HEK293 (cell line): ENCODE measurements at regions of chr18 and their contacts with region 1.

Region 1: DNA sequence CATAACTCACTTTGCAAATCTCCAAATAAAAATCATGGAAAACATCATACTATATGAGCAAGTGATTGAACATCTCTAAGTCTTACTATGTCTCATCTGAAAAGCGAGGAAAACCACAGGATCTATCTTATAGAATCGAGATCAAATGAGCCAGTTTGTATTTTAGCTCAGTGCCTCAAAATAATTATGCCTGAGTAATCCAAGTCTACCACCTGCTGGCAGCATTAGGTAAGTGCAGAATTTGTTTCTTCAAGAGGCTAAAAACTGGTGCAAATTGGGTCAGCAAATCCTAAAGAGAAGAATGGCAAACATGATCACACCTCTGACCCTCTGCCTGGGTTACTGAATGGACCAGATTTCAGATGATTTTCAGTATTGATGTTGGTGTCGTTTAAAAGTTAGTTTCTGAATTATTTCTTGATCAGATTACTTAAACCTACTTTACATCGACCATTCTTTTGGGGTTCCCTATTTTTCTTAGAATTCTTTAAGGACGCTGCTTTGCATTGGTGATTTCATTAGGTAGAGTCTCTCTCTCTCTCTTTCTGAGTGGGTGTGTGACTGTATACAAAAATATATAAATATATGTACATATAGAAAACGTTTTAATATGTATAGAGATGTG is 12.7 kb upstream of the FHOD3 start:
- H3K4me3 ChIP-seq: no peak overlapping the region
- H3K27ac ChIP-seq: no peak overlapping the region
- H3K4me1 ChIP-seq: no peaks in the 10 kb centered on the region
- CTCF ChIP-seq: peak; percentile 80; the same call in 1 of the 2 replicates

Region 2: GRCh38 chr18:36095936-36096519 is 188.8 kb before region 1 on chr18:
- CTCF ChIA-PET with region 1: interaction called, 181 read pairs
- POLR2A ChIA-PET with region 1: no interaction called
- H3K4me3 ChIP-seq: no peak overlapping the region
- H3K27ac ChIP-seq: no peak overlapping the region
- H3K4me1 ChIP-seq: no peaks in the 10 kb centered on the region
- CTCF ChIP-seq: peak; percentile 48; the same call in 1 of the 2 replicates

Region 3: GRCh38 chr18:36265015-36265414 is 19.8 kb before region 1 on chr18:
- CTCF ChIA-PET with region 1: interaction called, 11 read pairs
- POLR2A ChIA-PET with region 1: no interaction called
- H3K4me3 ChIP-seq: no peak overlapping the region
- H3K27ac ChIP-seq: no peak overlapping the region
- H3K4me1 ChIP-seq: no peaks in the 10 kb centered on the region
- CTCF ChIP-seq: no peak